ENCODE measurements at regions of chr4 and their contacts with region 1.

Region 1: DNA sequence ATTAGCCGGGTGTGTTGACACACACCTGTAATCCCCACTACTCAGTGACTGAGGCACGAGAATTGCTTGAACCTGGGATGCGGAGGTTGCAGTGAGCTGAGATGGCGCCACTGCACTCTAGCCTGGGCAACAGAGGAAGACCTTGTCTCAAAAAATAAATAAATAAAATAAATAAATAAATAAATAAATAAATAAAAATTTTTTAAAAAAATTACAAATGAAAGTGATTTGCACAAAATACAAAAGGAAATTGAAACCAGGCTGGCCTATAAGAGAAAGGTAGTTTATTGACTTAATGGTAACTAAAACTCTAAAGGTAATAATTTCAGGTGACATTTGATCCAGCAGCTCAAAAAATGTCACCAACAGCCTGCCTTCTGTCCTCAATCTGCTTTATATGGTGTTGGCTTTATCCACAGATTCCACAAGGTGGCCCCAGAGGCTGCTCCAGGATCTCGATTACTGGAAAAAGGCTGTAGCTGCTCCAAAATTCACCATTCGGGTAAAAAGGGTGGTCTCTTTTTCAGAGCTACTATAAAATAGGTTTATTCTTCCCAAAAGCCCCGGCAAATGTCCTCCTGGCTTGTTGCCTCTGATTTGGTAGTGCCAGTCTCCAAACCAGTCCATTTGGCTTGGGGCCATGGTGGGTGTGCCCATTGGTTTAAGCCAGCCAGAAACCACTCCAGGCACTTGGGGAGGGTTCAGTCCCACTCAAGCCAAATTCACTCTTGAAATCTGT is 61.4 kb upstream of the TRIM2 start:
- DNase-seq: no peak
- H3K4me3 ChIP-seq: no peak overlapping the region
- H3K27ac ChIP-seq: no peak overlapping the region
- H3K27me3 ChIP-seq: peaks cover 2% of the 10 kb centered on the region
- CTCF ChIP-seq: peak; percentile 97

Region 2: GRCh38 chr4:153076861-153077260 is 66.0 kb before region 1 on chr4:
- CTCF ChIA-PET with region 1: no interaction called
- POLR2A ChIA-PET with region 1: no interaction called
- DNase-seq: no peak
- H3K4me3 ChIP-seq: no peak overlapping the region
- H3K27ac ChIP-seq: no peak overlapping the region
- H3K27me3 ChIP-seq: peaks cover 14% of the 10 kb centered on the region
- CTCF ChIP-seq: no peak

Region 3: GRCh38 chr4:153159728-153160221 is 16.9 kb after region 1 on chr4:
- CTCF ChIA-PET with region 1: interaction called, 16 read pairs
- POLR2A ChIA-PET with region 1: no interaction called
- DNase-seq: no peak
- H3K4me3 ChIP-seq: no peak overlapping the region
- H3K27ac ChIP-seq: no peak overlapping the region
- H3K27me3 ChIP-seq: peaks cover 14% of the 10 kb centered on the region
- CTCF ChIP-seq: no peak

Region 4: DNA sequence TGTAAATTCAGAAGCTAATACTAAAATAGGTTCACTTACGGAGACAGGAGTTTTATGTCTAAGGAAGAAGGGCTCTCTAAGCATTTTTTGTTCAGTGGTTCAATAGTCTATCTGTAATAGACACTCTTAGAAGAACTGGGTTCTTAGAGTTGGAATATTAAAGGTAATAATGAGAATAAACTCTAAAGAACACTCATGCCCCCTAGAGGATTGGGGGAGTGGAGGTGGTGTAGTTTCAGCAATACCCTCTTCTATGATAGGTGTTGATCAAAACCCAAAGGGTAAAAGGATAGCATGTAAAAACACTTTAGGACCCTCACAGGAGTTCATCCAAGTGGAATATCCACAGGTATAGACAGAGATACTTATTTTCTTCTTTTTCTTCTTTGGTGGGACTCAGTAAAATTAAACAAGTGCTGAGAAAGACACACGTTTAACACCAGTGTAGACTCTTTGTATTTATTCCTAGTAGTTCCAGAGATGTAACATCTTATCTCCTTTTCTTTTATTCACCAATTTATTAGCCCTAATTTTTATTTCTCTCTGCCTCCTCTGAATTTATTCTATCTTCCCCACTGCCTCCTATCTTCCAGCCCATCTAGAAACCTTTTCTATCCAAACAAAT is 175.9 kb after region 1 on chr4:
- CTCF ChIA-PET with region 1: interaction called, 67 read pairs
- POLR2A ChIA-PET with region 1: no interaction called
- DNase-seq: no peak
- H3K4me3 ChIP-seq: no peak overlapping the region
- H3K27ac ChIP-seq: no peak overlapping the region
- H3K27me3 ChIP-seq: no peaks in the 10 kb centered on the region
- CTCF ChIP-seq: peak; percentile 86

Region 5: DNA sequence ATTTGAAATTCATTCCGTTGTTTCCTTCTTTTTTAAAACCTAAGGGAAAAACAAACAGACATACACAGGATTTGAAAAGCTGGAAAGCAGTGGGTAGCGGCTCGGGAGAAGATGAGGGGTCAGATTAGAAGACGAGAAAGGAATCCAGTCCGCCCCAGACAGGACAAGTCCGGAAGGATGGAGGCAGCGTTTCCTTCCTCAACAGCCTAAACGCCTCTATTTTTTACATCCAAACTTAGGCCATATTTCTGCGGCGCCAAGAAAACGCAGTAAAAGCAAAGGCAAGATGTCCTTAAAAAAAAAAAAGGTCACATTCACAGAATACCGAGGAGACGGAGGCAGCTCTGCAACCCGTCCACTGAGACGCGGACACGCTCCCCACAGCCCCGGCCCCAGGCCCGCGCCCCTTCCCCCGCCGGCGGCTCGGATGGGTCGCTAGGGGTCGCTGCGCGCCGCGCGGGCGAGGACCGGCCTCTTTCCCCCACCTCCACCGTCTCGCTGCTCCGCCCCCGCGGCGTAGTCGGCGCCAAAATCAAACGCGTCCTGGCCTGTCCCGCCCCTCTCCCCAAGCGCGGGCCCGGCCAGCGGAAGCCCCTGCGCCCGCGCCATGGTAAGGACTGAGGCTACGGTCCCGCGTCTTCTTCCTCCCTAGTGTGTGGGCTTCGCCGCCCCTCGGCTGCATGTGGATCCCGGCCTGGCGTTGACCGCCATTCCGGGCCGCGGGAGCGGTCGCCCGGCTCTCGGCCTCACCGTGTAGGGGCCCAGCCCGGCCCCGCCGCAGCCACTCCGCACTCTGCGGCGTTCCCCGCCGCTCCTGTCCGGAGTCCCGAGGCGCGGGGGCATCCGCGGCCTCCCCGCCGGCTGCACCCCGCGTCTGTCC is 201.5 kb after region 1 on chr4 and contains the start of gene MND1:
- CTCF ChIA-PET with region 1: interaction called, 35 read pairs
- POLR2A ChIA-PET with region 1: no interaction called
- DNase-seq: no peak
- H3K4me3 ChIP-seq: peak within 1 kb of the TSS; percentile 79
- H3K27ac ChIP-seq: no peak within 1 kb of the TSS
- H3K27me3 ChIP-seq: no peaks in the 10 kb centered on the region
- CTCF ChIP-seq: peak; percentile 77
- polyA plus RNA-seq, gene MND1: 0.97 and 2.2 TPM in 2 replicates

Region 6: DNA sequence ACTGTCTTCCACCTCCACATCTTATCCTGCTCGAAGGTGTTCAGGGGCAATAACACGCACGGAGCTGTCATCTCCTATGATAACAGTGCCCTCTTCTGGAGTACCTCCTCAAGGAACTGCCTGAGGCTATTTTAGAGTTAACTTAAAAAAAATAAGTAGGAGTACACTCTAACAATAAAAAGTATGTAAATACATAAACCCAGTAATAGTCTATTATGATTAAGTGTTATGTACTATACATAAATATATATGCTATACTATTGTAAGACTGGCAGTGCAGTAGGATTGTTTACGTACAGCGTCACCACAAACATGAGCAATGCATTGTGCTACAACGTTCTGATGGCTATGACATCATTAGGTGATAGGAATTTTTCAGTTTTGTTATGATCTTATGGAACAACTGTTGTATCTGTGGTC is 506.7 kb after region 1 on chr4:
- CTCF ChIA-PET with region 1: interaction called, 16 read pairs
- POLR2A ChIA-PET with region 1: no interaction called
- DNase-seq: no peak
- H3K4me3 ChIP-seq: no peak overlapping the region
- H3K27ac ChIP-seq: no peak overlapping the region
- H3K27me3 ChIP-seq: peaks cover 4% of the 10 kb centered on the region
- CTCF ChIP-seq: peak; percentile 50

Region 7: DNA sequence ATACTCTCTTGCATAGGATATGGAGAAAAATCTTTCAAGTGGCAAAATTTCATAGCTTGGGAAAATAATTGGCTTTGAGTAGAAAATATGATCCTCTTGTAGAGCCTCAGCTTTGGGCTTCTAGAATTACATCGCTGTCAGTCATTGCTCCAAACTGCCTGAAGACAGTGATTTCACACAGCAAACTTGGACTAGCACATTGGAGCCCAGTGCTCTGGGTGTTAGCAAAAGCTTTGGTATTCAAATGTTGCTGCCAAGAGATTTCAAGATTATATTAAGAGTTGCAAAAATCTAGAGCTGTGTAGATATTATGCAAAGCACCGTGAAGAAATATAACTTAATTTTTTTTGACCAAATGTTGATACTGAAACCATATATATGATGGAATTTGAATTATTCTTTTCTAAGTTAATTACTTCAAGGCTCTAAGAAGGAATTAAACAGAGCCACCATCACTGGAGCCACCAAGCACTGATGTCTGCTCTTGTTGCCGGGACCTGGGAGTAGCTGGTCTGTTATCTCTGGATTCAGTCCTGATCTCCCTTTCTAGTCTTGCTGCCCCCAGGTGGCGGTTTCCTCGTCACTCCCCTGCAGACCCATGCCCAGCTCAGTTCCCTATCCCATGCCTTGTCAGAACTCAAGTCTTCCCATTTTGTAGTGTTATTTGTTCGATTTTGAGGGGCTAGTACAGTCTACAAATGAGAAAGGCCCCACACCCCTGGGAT is 906.8 kb after region 1 on chr4:
- CTCF ChIA-PET with region 1: no interaction called
- POLR2A ChIA-PET with region 1: no interaction called
- DNase-seq: no peak
- H3K4me3 ChIP-seq: no peak overlapping the region
- H3K27ac ChIP-seq: no peak overlapping the region
- H3K27me3 ChIP-seq: no peaks in the 10 kb centered on the region
- CTCF ChIP-seq: no peak

Measured in AG04450 (cell line).